Sigmoid colon (tissue), 7 donors: ENCODE measurements at regions of chr9 and their contacts with region 1.

Region 1: DNA sequence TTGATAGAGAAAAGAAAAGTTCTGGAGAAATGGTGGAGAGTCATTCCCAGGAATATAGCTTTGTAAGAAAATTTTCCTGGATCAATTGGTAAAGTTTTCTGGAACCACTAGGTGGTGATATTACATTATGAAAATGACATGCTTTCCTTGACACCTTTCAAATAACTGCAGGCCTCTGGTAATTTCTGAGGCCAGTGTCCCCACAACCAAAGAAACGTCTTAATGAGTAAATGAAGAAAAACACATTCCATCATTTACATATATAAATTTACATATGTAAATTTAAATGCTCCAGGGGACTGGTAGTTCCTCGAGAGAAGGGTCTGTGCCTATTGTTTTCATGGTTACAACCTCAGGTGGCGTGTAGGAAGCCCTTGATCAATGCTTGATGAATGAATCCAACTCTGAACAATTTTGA is 17.2 kb upstream of the RGS3 start:
- DNase-seq: no peak
- H3K4me3 ChIP-seq: no peak overlapping the region
- H3K27ac ChIP-seq: peak overlapping the region in 1 of 4 donors; percentile 35
- H3K4me1 ChIP-seq: peaks cover 0 to 3% (median 0%) of the 10 kb centered on the region in 4 donors
- H3K27me3 ChIP-seq: no peaks in the 10 kb centered on the region
- CTCF ChIP-seq: peak; percentile 54 to 73 (median 56)
- EP300 ChIP-seq: no peak
- POLR2A ChIP-seq: no peak

Region 2: GRCh38 chr9:113581865-113582697 is 135.7 kb after region 1 on chr9:
- intact Hi-C with region 1: loop called (anchors 2 kb)
- DNase-seq: peak; percentile 91
- H3K4me3 ChIP-seq: peak overlapping the region in 3 of 4 donors; percentile 13 to 32 (median 30)
- H3K27ac ChIP-seq: peak overlapping the region; percentile 73 to 85 (median 84)
- H3K4me1 ChIP-seq: peaks cover 0 to 59% (median 51%) of the 10 kb centered on the region in 4 donors
- H3K27me3 ChIP-seq: no peaks in the 10 kb centered on the region
- CTCF ChIP-seq: peak in 3 of 4 experiments; percentile 14 to 38 (median 19)
- EP300 ChIP-seq: no peak
- POLR2A ChIP-seq: no peak

Region 3: GRCh38 chr9:113591001-113591898 is 144.9 kb after region 1 on chr9:
- intact Hi-C with region 1: loop called (anchors 2 kb)
- DNase-seq: peak; percentile 90
- H3K4me3 ChIP-seq: no peak overlapping the region
- H3K27ac ChIP-seq: peak overlapping the region in 3 of 4 donors; percentile 36 to 91 (median 51)
- H3K4me1 ChIP-seq: peaks cover 0 to 51% (median 42%) of the 10 kb centered on the region in 4 donors
- H3K27me3 ChIP-seq: no peaks in the 10 kb centered on the region
- CTCF ChIP-seq: peak; percentile 78 to 91 (median 88)
- EP300 ChIP-seq: no peak
- POLR2A ChIP-seq: no peak

Region 4: GRCh38 chr9:113657703-113658544 is 211.6 kb after region 1 on chr9:
- intact Hi-C with region 1: loop called (anchors 2 kb)
- DNase-seq: peak; percentile 91
- H3K4me3 ChIP-seq: no peak overlapping the region
- H3K27ac ChIP-seq: no peak overlapping the region
- H3K4me1 ChIP-seq: peaks cover 0 to 19% (median 12%) of the 10 kb centered on the region in 4 donors
- H3K27me3 ChIP-seq: peaks cover 0 to 7% (median 0%) of the 10 kb centered on the region in 3 donors
- CTCF ChIP-seq: peak; percentile 92 to 97 (median 95)
- EP300 ChIP-seq: no peak
- POLR2A ChIP-seq: no peak